A549 (cell line): ENCODE measurements at regions of chr9 and their contacts with region 1.

Region 1: GRCh38 chr9:74773886-74774479 is 113.7 kb downstream of the TRPM6 start:
- DNase-seq: peak; percentile 65 to 81
- ATAC-seq: peak; percentile 37 to 66; a peak in 4 of 6 replicates
- H3K4me3 ChIP-seq: no peak overlapping the region
- H3K27ac ChIP-seq: no peak overlapping the region
- H3K4me1 ChIP-seq: no peaks in the 10 kb centered on the region
- CTCF ChIP-seq: peak; percentile 94
- EP300 ChIP-seq: no peak
- POLR2A ChIP-seq: no peak
- RAD21 ChIP-seq: peak; percentile 91 to 94

Region 2: DNA sequence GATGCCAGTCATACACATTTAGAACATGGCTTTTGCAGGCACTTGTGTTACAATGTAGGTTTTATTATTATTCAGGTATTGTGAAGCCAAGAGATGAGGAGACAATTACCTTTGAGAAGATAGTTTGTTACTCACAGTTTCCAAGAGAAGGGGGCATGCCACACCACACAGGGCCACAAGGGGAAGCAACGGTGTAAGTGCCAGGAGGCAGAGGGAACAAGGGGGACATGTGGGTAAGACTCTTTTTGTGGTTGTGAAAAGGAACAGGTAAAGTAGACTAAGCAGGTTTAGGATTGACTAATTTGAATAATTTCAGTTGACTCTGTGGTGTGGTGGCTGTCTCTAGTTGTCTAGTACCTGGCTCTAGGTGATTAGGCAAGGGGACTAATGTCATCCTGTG is 77.5 kb before region 1 on chr9:
- CTCF ChIA-PET with region 1: no interaction called
- POLR2A ChIA-PET with region 1: no interaction called
- DNase-seq: no peak
- ATAC-seq: peak; percentile 47 to 64; a peak in 2 of 6 replicates
- H3K4me3 ChIP-seq: no peak overlapping the region
- H3K27ac ChIP-seq: no peak overlapping the region
- H3K4me1 ChIP-seq: no peaks in the 10 kb centered on the region
- CTCF ChIP-seq: no peak
- EP300 ChIP-seq: no peak
- POLR2A ChIP-seq: no peak
- RAD21 ChIP-seq: no peak

Region 3: DNA sequence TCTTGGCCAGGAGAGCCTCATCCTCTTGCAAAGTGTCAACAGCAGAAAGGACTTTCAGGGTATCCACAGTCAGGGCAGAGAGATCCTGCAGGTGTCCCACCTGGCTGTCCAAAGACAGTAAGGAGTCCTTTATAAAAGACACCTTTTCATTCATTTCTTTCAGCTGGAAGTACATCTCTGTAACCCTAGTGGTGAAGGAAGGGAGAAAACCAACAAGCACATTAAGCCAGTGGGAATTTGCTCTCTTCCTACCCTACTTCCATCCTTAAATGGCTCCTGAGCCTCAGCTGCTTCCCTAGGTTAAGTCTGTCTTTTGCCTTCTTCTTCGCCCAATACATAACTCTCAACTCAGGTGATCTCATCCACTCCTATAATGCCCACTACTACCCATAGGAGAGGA is 11.0 kb before region 1 on chr9:
- CTCF ChIA-PET with region 1: interaction called, 49 read pairs
- POLR2A ChIA-PET with region 1: no interaction called
- DNase-seq: no peak
- ATAC-seq: peak; percentile 41 to 47; a peak in 2 of 6 replicates
- H3K4me3 ChIP-seq: no peak overlapping the region
- H3K27ac ChIP-seq: no peak overlapping the region; a peak in 1 of 6 replicates
- H3K4me1 ChIP-seq: peaks cover 16% of the 10 kb centered on the region
- CTCF ChIP-seq: no peak
- EP300 ChIP-seq: no peak
- POLR2A ChIP-seq: no peak
- RAD21 ChIP-seq: no peak

Region 4: GRCh38 chr9:74858751-74859414 is 84.9 kb after region 1 on chr9:
- CTCF ChIA-PET with region 1: no interaction called
- POLR2A ChIA-PET with region 1: no interaction called
- DNase-seq: peak in 1 of 2 experiments; percentile 23
- ATAC-seq: peak in 1 of 2 experiments; percentile 38; a peak in 1 of 6 replicates
- H3K4me3 ChIP-seq: no peak overlapping the region
- H3K27ac ChIP-seq: peak overlapping the region in 1 of 2 experiments; percentile 60; a peak in 3 of 6 replicates
- H3K4me1 ChIP-seq: peaks cover 6% of the 10 kb centered on the region; the same call in 1 of the 3 replicates
- CTCF ChIP-seq: no peak
- EP300 ChIP-seq: no peak
- POLR2A ChIP-seq: no peak
- RAD21 ChIP-seq: no peak

Region 5: GRCh38 chr9:74952281-74953151 is 178.5 kb after region 1 on chr9 and contains the start of gene C9orf40:
- CTCF ChIA-PET with region 1: interaction called, 200 read pairs
- POLR2A ChIA-PET with region 1: interaction called, 4 read pairs
- DNase-seq: peak; percentile 71 to 91
- ATAC-seq: peak; percentile 95 to 96
- H3K4me3 ChIP-seq: peak within 1 kb of the TSS; percentile 90
- H3K27ac ChIP-seq: peak within 1 kb of the TSS; percentile 92 to 95
- H3K4me1 ChIP-seq: 0 out of 3 replicates have a peak, but pooled peaks cover 4% of the 10 kb centered on the region
- CTCF ChIP-seq: peak; percentile 76
- EP300 ChIP-seq: no peak
- POLR2A ChIP-seq: peak; percentile 33
- RAD21 ChIP-seq: peak; percentile 34 to 52; a peak in 3 of 5 replicates
- polyA plus RNA-seq, gene C9orf40: 4.0 and 8.8 TPM in 2 replicates

Region 6: GRCh38 chr9:75027187-75028107 is 253.5 kb after region 1 on chr9:
- CTCF ChIA-PET with region 1: interaction called, 84 read pairs
- POLR2A ChIA-PET with region 1: interaction called, 20 read pairs
- DNase-seq: peak; percentile 58 to 61
- ATAC-seq: peak; percentile 81 to 83
- H3K4me3 ChIP-seq: peak overlapping the region; percentile 84
- H3K27ac ChIP-seq: peak overlapping the region; percentile 99
- H3K4me1 ChIP-seq: peaks cover 15% of the 10 kb centered on the region; the same call in 2 of the 3 replicates
- CTCF ChIP-seq: no peak; the same call in 1 of the 3 replicates
- EP300 ChIP-seq: no peak
- POLR2A ChIP-seq: no peak
- RAD21 ChIP-seq: no peak

Region 7: GRCh38 chr9:75088260-75088905 is 314.4 kb after region 1 on chr9 and contains the start of gene OSTF1:
- CTCF ChIA-PET with region 1: interaction called, 278 read pairs
- POLR2A ChIA-PET with region 1: interaction called, 10 read pairs
- DNase-seq: peak; percentile 92 to 93
- ATAC-seq: peak; percentile 93 to 95
- H3K4me3 ChIP-seq: peak within 1 kb of the TSS; percentile 95
- H3K27ac ChIP-seq: peak within 1 kb of the TSS; percentile 78 to 86
- H3K4me1 ChIP-seq: peaks cover 8% of the 10 kb centered on the region
- CTCF ChIP-seq: no peak
- EP300 ChIP-seq: no peak
- POLR2A ChIP-seq: peak; percentile 70
- RAD21 ChIP-seq: no peak
- polyA plus RNA-seq, gene OSTF1: 10.1 and 12.7 TPM in 2 replicates